ENCODE measurements at regions of chr14 and their contacts with region 1.

Region 1: DNA sequence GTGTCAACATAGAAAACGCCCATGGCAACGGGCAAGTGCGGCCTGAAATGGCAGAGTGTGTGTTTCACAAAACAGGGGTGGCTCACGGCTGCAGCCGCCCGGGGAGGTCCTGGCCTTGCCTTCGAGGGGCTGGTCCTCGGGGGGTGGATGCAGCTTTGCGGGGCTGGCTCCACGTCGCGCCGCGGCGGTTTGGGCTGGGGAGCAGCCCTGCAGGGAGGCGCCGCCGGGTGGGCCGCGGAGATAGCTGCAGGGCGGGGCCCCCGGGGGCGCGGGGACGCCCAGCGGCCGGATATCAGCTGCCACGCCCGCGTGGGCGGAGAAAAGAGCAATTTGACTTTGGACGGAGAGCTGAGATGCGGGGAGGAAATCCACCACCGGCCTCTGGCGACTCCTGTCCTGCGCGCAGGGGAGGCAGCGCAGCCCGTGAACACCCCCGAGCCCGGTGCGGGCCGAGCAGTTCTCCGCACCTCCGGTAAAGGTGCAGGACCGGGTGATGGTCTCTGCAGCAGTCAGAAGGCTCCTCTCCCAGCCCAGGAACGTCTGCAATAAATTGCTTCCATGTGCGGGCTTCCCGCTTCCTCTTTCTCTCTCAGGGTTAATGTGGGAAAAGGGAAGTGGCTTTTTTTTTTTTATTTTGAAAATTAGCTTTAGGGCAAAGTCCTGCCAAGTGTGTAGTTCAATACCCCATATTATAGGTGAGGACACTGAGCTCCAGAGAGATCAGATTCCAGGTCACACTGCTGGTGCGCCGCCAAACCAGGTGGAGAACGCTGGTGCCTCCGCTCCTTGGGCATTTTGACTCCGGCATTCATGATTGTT is 110.5 kb downstream of the ARF6 start:
- DNase-seq: peak; percentile 95
- H3K4me3 Mint-ChIP-seq: peak overlapping the region; percentile 83
- H3K27ac Mint-ChIP-seq: peak overlapping the region; percentile 96
- H3K4me1 Mint-ChIP-seq: peaks cover 58% of the 10 kb centered on the region
- H3K27me3 Mint-ChIP-seq: no peaks in the 10 kb centered on the region

Region 2: GRCh38 chr14:49867831-49868723 is 135.3 kb before region 1 on chr14:
- intact Hi-C with region 1: loop called (anchors 1 kb)
- DNase-seq: peak; percentile 98
- H3K4me3 Mint-ChIP-seq: peak overlapping the region; percentile 99
- H3K27ac Mint-ChIP-seq: peak overlapping the region; percentile 97
- H3K4me1 Mint-ChIP-seq: peaks cover 23% of the 10 kb centered on the region
- H3K27me3 Mint-ChIP-seq: no peaks in the 10 kb centered on the region

Region 3: GRCh38 chr14:49959822-49960408 is 43.5 kb before region 1 on chr14:
- intact Hi-C with region 1: loop called (anchors 5 kb)
- DNase-seq: peak; percentile 74
- H3K4me3 Mint-ChIP-seq: peak overlapping the region; percentile 39
- H3K27ac Mint-ChIP-seq: peak overlapping the region; percentile 18
- H3K4me1 Mint-ChIP-seq: peaks cover 39% of the 10 kb centered on the region
- H3K27me3 Mint-ChIP-seq: no peaks in the 10 kb centered on the region

Region 4: GRCh38 chr14:50021261-50022031 is 18.0 kb after region 1 on chr14:
- intact Hi-C with region 1: loop called (anchors 1 kb)
- DNase-seq: peak; percentile 75
- H3K4me3 Mint-ChIP-seq: peak overlapping the region; percentile 52
- H3K27ac Mint-ChIP-seq: peak overlapping the region; percentile 82
- H3K4me1 Mint-ChIP-seq: peaks cover 29% of the 10 kb centered on the region
- H3K27me3 Mint-ChIP-seq: no peaks in the 10 kb centered on the region

Region 5: GRCh38 chr14:50070840-50071548 is 67.6 kb after region 1 on chr14:
- intact Hi-C with region 1: no loop called
- DNase-seq: no peak
- H3K4me3 Mint-ChIP-seq: no peak overlapping the region
- H3K27ac Mint-ChIP-seq: peak overlapping the region; percentile 36
- H3K4me1 Mint-ChIP-seq: peaks cover 37% of the 10 kb centered on the region
- H3K27me3 Mint-ChIP-seq: no peaks in the 10 kb centered on the region

Region 6: DNA sequence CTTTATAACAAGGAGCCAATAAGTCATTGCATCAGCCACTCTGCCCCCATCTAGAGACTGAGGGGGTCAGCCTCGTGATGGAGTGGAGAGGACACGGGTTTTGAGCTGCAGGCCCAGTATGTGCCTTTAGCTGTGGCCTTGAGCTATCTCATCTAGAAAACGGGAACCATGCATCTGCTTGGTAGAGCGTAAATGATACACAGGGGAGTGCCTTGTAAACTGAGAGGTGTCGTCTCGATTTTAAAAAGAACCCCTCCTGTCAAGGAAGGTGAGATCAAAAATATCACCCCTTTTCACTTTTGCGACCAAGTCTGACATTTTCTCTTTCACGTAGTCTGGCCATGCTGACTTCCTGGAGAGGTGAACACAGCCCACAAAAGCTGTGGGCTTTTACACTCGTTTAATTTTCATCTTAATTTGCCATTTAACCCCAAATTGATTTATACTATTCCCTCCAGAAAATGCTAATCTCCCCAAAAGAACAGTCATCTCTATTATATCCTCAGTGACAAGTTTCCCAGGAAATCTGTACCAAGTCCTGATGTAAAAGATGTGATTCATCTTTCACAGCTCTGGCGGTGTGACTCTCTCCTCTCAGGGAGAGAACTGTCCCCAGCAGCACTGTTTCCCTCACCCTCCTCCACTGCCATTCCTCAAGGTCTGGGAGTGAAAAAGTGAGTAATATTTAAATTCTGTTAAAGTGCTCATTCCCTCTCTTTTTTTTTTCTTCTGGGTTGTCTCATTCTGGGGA is 82.3 kb after region 1 on chr14:
- intact Hi-C with region 1: loop called (anchors 1 kb)
- DNase-seq: peak; percentile 74
- H3K4me3 Mint-ChIP-seq: peak overlapping the region; percentile 63
- H3K27ac Mint-ChIP-seq: peak overlapping the region; percentile 93
- H3K4me1 Mint-ChIP-seq: peaks cover 80% of the 10 kb centered on the region
- H3K27me3 Mint-ChIP-seq: no peaks in the 10 kb centered on the region